Activated B cell treated with CpG ODN at 0.5 μM for 24 hours (primary cell): ENCODE measurements at regions of chr20 and their contacts with region 1.

Region 1: GRCh38 chr20:35502352-35502751 is 27.1 kb downstream of the C20orf173 start:
- DNase-seq: peak; percentile 49
- ATAC-seq: peak; percentile 95
- H3K4me3 Mint-ChIP-seq: peak overlapping the region; percentile 44
- H3K27ac Mint-ChIP-seq: peak overlapping the region; percentile 68
- H3K4me1 Mint-ChIP-seq: peaks cover 55% of the 10 kb centered on the region
- H3K27me3 Mint-ChIP-seq: no peaks in the 10 kb centered on the region
- CTCF ChIP-seq: no peak

Region 2: DNA sequence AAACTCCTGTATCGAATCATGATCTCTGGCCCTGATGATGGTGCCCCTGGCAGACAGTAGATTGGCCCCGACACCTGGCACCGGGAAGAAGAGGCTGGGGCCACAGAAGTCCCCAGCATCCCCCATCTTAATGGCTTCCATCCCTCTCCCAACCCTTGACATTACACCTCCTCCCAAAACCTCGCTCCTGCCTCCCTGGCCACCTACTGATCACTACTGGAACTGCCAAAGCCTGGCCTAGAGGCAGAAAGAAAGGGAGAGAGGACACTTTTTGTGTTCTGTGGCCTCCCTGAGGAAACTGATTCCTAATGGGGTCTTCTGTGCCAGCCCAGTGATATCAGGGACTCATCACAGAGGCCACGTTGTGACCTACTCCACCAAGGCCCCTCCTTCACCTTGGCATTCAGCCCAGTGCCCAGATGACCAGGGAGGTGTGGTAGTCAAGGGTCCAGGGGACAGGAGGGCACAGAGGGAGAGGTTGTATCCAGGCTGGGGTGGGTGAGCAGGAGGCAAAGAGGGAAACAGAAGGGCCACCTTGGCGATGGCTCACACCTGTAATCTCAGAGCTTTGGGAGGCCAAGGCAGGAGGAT is 21.0 kb after region 1 on chr20:
- CTCF ChIA-PET with region 1: interaction called, 3 read pairs
- POLR2A ChIA-PET with region 1: no interaction called
- intact Hi-C with region 1: loop called (anchors 2 kb)
- DNase-seq: no peak
- ATAC-seq: peak; percentile 61
- H3K4me3 Mint-ChIP-seq: no peak overlapping the region
- H3K27ac Mint-ChIP-seq: no peak overlapping the region
- H3K4me1 Mint-ChIP-seq: no peaks in the 10 kb centered on the region
- H3K27me3 Mint-ChIP-seq: no peaks in the 10 kb centered on the region
- CTCF ChIP-seq: no peak